ENCODE measurements at regions of chr1 and their contacts with region 1.

Region 1: DNA sequence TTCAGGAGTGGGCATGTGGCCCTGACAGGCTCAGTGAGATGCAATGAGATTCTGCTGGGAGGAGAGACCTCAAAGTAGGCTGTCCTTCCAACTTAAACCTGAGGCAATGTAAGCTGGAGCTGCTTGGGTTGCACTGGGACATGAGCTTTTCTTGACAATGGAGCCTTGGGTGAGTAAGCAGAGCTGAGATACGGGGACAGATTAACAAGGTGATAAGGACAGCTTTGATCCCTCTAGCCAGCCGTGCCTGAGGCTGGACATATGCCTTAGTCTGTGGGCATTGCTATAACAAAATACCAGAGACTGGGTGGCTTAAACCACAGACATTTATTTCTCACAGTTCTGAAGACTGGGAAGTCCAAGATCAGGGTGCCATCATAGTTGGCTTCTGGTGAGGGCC is 18.3 kb upstream of the NGF start:
- DNase-seq: no peak
- H3K4me3 ChIP-seq: no peak overlapping the region
- CTCF ChIP-seq: no peak
- POLR2A ChIP-seq: no peak

Region 2: DNA sequence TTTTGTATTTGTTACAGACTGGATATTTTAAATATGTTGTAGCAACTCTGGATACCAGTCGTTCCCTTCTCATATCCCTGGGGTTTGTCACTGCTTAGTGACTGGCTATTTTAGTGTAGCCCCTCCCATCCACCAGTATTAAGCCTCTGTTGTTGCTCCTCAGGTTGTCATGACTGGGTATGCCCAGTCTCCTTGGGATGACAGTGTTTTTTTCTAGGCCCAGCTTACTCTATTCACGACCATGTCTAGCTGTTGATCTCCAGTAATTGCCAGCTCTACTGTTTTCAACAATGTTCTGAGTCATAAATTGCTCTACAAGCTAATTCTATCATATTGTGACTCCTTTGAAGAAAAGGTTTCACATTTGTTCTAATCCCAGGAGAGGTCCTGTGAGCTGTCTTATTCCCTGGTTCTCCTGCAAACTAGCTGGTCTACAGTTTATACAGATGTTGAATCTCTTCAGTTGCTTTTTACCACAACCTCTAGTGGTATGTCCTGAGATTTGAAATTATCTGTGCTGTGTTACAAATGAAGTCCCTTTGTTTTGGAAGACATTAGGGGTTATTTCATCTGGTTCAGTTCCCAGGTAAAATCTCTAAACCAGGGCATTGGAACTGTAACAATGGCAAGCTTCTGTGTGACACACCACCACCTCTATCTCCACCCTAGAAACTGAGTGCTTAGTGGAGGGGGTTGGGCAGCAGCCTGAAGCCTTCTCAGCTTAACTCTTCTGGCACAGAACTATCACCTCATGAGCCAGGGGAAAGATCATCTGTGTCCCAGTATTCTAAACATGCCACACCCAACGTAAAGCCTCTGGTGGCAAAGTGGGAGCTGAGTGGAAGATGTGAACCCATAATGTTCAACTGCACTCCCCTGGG is 970.0 kb before region 1 on chr1:
- intact Hi-C with region 1: loop called (anchors 5 kb)
- DNase-seq: no peak
- H3K4me3 ChIP-seq: no peak overlapping the region
- CTCF ChIP-seq: no peak
- POLR2A ChIP-seq: no peak

Measured in lower leg skin (tissue), 4 donors.